ENCODE measurements at regions of chr2 and their contacts with region 1.

Region 1: DNA sequence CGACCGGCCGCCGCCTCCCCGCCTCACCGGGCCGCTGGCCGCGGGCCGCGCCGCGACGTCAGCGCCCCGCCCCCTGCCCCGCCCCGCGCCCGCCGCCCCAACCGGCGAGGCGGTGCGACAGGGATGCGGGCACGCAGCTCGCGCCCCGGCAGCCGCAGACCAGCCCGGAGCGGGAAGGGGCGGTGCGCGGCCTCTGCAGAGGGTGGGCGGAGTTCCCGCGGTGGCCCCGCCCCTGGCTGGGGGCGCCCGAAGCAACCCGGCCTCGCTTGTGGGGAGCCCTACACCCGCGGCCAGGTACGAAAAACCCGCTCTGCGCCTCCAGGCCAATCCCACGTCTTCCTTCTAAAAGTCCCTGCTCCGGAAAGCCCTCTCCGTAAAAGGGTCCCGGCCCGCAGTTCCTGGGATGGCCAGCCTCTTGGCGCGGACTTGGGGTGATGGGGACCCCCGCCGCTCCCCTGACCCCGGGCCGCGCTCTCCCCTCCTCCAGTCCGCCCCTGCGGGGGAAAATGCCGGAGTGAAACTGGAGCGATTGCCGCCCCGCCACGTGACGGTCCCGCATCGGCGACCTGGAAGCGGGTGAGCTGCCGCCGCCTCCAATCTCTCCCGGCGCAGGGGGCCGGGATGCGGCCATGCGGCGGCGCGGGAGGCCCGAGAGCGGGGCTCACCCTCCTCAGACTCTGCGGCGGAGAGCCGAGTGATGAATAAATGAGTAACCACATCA is at the start of gene RAB11FIP5:
- DNase-seq: peak; percentile 49 to 62
- ATAC-seq: peak; percentile 81 to 86
- H3K4me3 ChIP-seq: peak within 1 kb of the TSS; percentile 80 to 99 (median 94)
- H3K27ac ChIP-seq: peak within 1 kb of the TSS; percentile 81 to 96 (median 87)
- H3K4me1 ChIP-seq: peaks cover 32 to 33% of the 10 kb centered on the region in 2 donors
- H3K27me3 ChIP-seq: no peaks in the 10 kb centered on the region
- CTCF ChIP-seq: peak in 2 of 5 experiments; percentile 19 to 21
- POLR2A ChIP-seq: peak; percentile 52 to 55
- total RNA-seq, gene RAB11FIP5: 27.1 to 35.3 (median 33.7) TPM

Region 2: GRCh38 chr2:71943238-71944182 is 1169.6 kb before region 1 on chr2:
- in situ Hi-C with region 1: no loop called
- intact Hi-C with region 1: loop called (anchors 5 kb)
- DNase-seq: peak; percentile 38 to 64
- ATAC-seq: peak; percentile 9 to 16
- H3K4me3 ChIP-seq: no peak overlapping the region
- H3K27ac ChIP-seq: peak overlapping the region; percentile 49 to 92 (median 74)
- H3K4me1 ChIP-seq: peaks cover 41 to 49% of the 10 kb centered on the region in 2 donors
- H3K27me3 ChIP-seq: no peaks in the 10 kb centered on the region
- CTCF ChIP-seq: no peak
- POLR2A ChIP-seq: no peak

Region 3: DNA sequence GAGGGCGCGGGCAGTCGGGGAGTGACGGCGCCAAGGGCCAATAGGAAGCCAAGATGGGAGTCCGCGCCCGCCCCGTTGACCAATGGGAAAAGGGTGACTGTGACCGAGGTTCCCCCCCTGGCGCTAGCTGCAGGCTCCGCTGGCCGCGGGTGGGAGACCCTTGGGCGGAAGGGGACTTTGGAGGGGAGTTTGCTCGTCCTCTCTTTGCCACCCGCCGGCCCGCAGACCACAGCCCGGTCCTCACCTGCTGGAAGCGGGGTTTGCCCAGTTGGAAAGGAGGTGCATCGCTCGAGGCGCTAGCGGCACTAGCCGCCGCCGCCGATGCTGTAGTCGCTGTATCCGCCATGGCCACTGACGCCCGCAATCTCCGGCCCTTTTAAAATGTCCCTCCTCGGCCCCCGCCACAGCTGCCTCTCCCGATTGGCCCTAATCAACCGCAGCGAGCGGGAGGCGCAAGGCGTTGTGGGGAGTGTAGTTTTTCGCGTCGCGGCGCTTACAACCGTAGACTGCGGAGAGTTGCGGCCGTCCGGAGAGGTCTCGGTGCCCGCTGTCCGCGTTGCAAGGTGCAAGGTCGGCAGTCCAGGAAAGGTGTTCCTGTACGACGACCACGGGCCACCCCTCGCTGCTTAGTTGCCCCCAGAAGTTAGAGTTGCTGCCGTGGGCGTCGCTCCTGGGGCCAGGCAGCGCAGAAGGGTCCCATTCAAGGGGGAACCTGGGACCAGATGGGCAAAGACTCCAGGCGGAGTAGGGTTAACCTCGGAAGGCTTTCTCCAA is 41.5 kb before region 1 on chr2 and contains the start of gene SFXN5:
- in situ Hi-C with region 1: no loop called
- intact Hi-C with region 1: loop called (anchors 1 kb)
- DNase-seq: peak; percentile 98
- ATAC-seq: peak; percentile 84 to 90
- H3K4me3 ChIP-seq: peak within 1 kb of the TSS; percentile 83 to 93 (median 92)
- H3K27ac ChIP-seq: peak within 1 kb of the TSS; percentile 87 to 97 (median 92)
- H3K4me1 ChIP-seq: peaks cover 19 to 48% of the 10 kb centered on the region in 2 donors
- H3K27me3 ChIP-seq: no peaks in the 10 kb centered on the region
- CTCF ChIP-seq: peak in 2 of 5 experiments; percentile 32 to 35
- POLR2A ChIP-seq: peak; percentile 24 to 59
- total RNA-seq, gene SFXN5: 6.8 to 22.7 (median 9.1) TPM

Region 4: DNA sequence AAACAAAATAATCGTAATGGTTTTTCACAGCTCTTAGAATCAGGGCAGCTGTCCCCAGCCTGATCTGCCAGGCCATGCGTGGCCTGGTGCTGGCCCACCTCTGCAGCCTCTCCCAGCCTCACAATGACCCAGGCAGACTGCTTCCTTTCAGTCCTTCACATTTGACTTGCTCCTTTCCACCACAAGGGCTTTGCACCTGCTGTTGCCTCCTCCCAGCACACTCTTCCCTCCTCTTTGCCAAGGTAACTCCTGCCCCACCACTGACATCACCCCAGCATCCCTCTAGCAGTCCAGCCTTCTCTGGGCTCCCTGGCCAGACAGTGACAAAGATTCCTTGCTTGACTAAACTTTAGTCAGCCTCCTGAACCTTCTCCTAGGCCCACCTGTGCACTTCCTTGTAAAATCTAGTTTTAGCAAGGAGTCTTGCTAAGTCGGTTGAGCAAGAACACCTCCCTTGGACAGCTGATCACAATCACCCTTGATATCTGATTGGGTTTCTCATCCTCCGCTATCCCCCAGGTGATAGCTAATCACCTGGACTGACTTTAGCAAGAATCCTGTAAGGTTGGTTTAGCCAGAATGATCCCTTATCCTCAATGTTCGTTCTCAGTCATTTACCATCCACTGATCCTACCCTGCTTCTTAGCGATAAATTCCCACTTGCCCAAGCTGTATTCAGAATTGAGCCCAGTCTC is 15.9 kb after region 1 on chr2:
- in situ Hi-C with region 1: no loop called
- intact Hi-C with region 1: no loop called
- DNase-seq: no peak
- ATAC-seq: no peak
- H3K4me3 ChIP-seq: no peak overlapping the region
- H3K27ac ChIP-seq: no peak overlapping the region
- H3K4me1 ChIP-seq: no peaks in the 10 kb centered on the region
- H3K27me3 ChIP-seq: no peaks in the 10 kb centered on the region
- CTCF ChIP-seq: no peak
- POLR2A ChIP-seq: no peak

Region 5: DNA sequence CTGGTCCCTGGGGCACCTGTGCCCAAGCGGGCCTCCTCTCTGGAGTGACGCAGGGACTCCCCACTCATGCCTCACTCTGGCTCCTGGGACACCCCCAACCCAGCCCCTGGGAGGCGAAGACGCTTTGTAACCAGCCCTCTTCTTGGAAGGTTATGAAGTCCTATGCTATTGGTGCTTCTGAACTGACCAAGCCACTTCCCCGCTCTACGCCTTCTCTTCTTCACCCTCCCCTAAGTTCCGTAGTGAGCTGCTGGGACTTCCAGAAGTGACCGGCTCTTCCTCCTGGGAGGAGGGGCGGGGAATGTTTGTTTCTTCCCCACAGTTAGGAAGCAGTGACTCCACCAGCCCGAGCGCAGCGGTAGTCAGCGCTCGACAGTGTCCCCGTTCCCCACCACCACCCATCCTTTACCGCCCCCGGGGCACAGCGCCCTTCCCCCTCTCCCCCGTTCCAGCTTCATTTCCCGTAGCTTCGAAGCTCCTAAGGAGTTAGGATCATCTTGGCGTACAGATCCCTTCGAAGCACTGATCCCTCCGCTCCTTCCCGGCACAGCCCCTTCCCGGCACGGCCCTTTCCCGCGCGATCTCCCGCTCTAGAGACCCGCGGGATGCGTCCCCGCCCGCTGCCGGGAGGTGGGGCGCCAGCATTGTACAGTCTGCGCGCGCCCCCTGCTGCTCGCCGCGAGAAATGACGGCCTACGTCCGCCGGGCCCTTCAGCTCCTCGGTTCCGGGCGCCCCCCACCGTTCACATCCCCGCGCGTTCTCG is 64.0 kb after region 1 on chr2:
- in situ Hi-C with region 1: no loop called
- intact Hi-C with region 1: loop called (anchors 1 kb)
- DNase-seq: peak; percentile 69 to 77
- ATAC-seq: peak; percentile 90 to 93
- H3K4me3 ChIP-seq: peak overlapping the region; percentile 52 to 87 (median 65)
- H3K27ac ChIP-seq: peak overlapping the region; percentile 62 to 81 (median 74)
- H3K4me1 ChIP-seq: peaks cover 0 to 18% of the 10 kb centered on the region in 2 donors
- H3K27me3 ChIP-seq: peaks cover 18 to 29% (median 26%) of the 10 kb centered on the region in 3 donors
- CTCF ChIP-seq: peak; percentile 93 to 99 (median 96)
- POLR2A ChIP-seq: peak; percentile 15 to 25

Region 6: GRCh38 chr2:73212448-73213176 is 99.5 kb after region 1 on chr2:
- in situ Hi-C with region 1: no loop called
- intact Hi-C with region 1: loop called (anchors 5 kb)
- DNase-seq: peak; percentile 32 to 56
- ATAC-seq: peak; percentile 38 to 48
- H3K4me3 ChIP-seq: no peak overlapping the region
- H3K27ac ChIP-seq: peak overlapping the region in 1 of 4 donors; percentile 58
- H3K4me1 ChIP-seq: peaks cover 9 to 12% of the 10 kb centered on the region in 2 donors
- H3K27me3 ChIP-seq: no peaks in the 10 kb centered on the region
- CTCF ChIP-seq: peak; percentile 57 to 88 (median 78)
- POLR2A ChIP-seq: no peak

Region 7: GRCh38 chr2:73233154-73233931 is 120.3 kb after region 1 on chr2 and contains the start of gene PRADC1:
- in situ Hi-C with region 1: no loop called
- intact Hi-C with region 1: loop called (anchors 5 kb)
- DNase-seq: peak; percentile 100
- ATAC-seq: peak; percentile 90 to 93
- H3K4me3 ChIP-seq: peak within 1 kb of the TSS; percentile 67 to 100 (median 95)
- H3K27ac ChIP-seq: peak within 1 kb of the TSS; percentile 90 to 100 (median 95)
- H3K4me1 ChIP-seq: peaks cover 17 to 35% of the 10 kb centered on the region in 2 donors
- H3K27me3 ChIP-seq: no peaks in the 10 kb centered on the region
- CTCF ChIP-seq: no peak
- POLR2A ChIP-seq: peak; percentile 85 to 87
- total RNA-seq, gene PRADC1: 69.4 to 132 (median 104) TPM

Region 8: DNA sequence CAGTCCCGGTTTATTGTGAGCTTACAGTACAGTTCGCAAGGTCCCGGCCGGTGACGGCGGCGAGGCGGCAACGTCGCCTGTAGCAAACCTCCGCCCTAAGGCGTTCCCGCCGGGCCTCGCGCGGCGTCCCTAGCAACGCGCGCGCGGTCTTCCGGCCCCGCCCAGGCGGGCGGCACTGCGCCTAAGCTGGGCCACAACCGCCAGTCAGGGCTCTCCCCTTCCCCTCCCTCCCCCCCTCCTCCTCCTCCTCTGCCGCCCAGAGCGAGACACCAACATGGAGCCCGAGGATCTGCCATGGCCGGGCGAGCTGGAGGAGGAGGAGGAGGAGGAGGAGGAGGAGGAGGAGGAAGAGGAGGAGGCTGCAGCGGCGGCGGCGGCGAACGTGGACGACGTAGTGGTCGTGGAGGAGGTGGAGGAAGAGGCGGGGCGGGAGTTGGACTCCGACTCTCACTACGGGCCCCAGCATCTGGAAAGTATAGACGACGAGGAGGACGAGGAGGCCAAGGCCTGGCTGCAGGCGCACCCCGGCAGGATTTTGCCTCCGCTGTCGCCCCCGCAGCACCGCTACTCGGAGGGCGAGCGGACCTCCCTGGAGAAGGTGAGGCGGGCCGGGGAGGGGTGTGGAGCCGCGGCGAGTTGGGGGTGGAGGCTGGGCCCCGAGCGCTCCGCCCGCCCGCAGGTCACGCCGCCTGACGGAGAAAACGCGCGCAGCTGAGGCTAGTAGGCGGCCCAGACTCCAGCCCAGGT is 272.7 kb after region 1 on chr2 and contains the start of gene ALMS1:
- in situ Hi-C with region 1: no loop called
- intact Hi-C with region 1: loop called (anchors 10 kb)
- DNase-seq: peak; percentile 68 to 84
- ATAC-seq: peak; percentile 91
- H3K4me3 ChIP-seq: peak within 1 kb of the TSS; percentile 81 to 97 (median 92)
- H3K27ac ChIP-seq: peak within 1 kb of the TSS; percentile 88 to 96 (median 91)
- H3K4me1 ChIP-seq: peaks cover 12 to 23% of the 10 kb centered on the region in 2 donors
- H3K27me3 ChIP-seq: no peaks in the 10 kb centered on the region
- CTCF ChIP-seq: peak in 3 of 5 experiments; percentile 13 to 53 (median 33)
- POLR2A ChIP-seq: peak in 1 of 2 donors; percentile 26
- total RNA-seq, gene ALMS1: 10.0 to 18.1 (median 13.9) TPM